Psoas muscle (tissue), 8 donors: ENCODE measurements at regions of chr7 and their contacts with region 1.

Region 1: DNA sequence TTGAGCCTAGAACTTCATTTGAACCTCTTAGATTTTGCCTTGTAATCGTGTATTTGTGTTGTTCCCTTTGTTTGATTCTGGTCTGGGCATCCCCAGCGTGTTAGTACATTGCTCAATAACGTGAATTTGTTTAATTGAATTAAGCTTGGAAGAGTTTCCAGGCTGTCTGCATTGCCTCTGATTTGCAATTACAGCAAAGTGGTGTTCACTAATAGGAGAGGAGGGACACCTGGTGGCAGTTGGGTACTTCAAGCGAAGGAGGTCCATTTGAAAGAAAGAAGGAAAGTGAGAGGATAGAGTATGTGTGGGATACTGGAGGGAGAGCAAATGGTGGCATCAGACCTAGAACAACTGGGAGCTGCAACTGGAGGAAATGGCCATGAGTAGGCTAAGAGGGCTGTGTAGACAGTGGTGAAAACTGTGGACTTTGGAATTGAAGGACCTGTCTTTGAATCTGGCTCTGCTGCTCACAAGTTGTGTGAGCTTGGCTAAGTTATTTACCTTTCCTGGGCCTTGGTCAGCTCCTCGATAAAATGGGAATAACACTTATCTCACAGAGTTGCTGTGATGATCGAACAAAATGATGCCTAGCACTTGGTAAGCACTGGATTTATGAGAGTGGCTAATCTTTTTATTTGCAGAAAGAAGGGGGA is 15.1 kb downstream of the LSMEM1 start:
- DNase-seq: peak in 1 of 2 donors; percentile 55
- ATAC-seq: peak; percentile 86 to 96 (median 90)
- H3K4me3 ChIP-seq: no peak overlapping the region
- H3K27ac ChIP-seq: no peak overlapping the region
- H3K4me1 ChIP-seq: peaks cover 11% of the 10 kb centered on the region
- H3K27me3 ChIP-seq: no peaks in the 10 kb centered on the region
- CTCF ChIP-seq: peak; percentile 68

Region 2: GRCh38 chr7:111741811-111742240 is 754.1 kb before region 1 on chr7:
- intact Hi-C with region 1: loop called in 1 of 2 experiments (anchors 2 kb)
- DNase-seq: no peak
- ATAC-seq: peak; percentile 68 to 83 (median 72)
- H3K4me3 ChIP-seq: no peak overlapping the region
- H3K27ac ChIP-seq: no peak overlapping the region
- H3K4me1 ChIP-seq: no peaks in the 10 kb centered on the region
- H3K27me3 ChIP-seq: no peaks in the 10 kb centered on the region
- CTCF ChIP-seq: peak; percentile 64

Region 3: DNA sequence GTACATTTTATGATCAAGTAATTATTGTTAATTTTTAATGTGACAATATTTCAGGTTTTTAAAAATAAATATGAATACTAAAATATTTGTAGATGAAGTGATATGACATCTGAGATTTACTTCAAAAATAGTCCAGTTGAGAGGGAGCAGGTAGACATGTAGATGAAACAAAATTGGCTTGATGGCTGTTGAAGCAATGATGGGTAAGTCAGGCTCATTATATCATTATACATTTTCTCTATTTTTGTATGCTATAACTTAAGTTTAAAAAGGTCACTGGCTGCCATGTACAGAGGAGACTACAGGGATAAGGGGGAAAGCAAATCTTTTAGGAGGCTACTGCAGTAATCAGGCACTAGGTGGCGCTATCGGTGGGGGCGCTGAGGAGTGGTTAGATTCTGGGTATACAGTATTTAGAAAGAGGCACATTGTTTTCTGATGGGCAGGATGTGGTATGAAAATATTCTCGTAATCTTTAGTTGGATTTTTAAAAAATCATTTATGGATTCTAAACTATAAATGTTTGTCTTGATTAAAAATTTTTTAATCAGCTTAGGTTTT is 743.8 kb before region 1 on chr7:
- intact Hi-C with region 1: loop called in 1 of 2 experiments (anchors 10 kb)
- DNase-seq: peak; percentile 39 to 58
- ATAC-seq: peak in 1 of 4 donors; percentile 57
- H3K4me3 ChIP-seq: no peak overlapping the region
- H3K27ac ChIP-seq: no peak overlapping the region
- H3K4me1 ChIP-seq: no peaks in the 10 kb centered on the region
- H3K27me3 ChIP-seq: no peaks in the 10 kb centered on the region
- CTCF ChIP-seq: peak; percentile 53

Region 4: GRCh38 chr7:111953611-111954010 is 542.3 kb before region 1 on chr7:
- intact Hi-C with region 1: loop called (anchors 2 to 10 kb)
- DNase-seq: no peak
- ATAC-seq: peak; percentile 85 to 88 (median 88)
- H3K4me3 ChIP-seq: no peak overlapping the region
- H3K27ac ChIP-seq: no peak overlapping the region
- H3K4me1 ChIP-seq: peaks cover 8% of the 10 kb centered on the region
- H3K27me3 ChIP-seq: no peaks in the 10 kb centered on the region
- CTCF ChIP-seq: peak; percentile 30

Region 5: GRCh38 chr7:112386619-112387018 is 109.3 kb before region 1 on chr7:
- intact Hi-C with region 1: no loop called
- DNase-seq: no peak
- ATAC-seq: no peak
- H3K4me3 ChIP-seq: no peak overlapping the region
- H3K27ac ChIP-seq: no peak overlapping the region
- H3K4me1 ChIP-seq: no peaks in the 10 kb centered on the region
- H3K27me3 ChIP-seq: no peaks in the 10 kb centered on the region
- CTCF ChIP-seq: no peak

Region 6: DNA sequence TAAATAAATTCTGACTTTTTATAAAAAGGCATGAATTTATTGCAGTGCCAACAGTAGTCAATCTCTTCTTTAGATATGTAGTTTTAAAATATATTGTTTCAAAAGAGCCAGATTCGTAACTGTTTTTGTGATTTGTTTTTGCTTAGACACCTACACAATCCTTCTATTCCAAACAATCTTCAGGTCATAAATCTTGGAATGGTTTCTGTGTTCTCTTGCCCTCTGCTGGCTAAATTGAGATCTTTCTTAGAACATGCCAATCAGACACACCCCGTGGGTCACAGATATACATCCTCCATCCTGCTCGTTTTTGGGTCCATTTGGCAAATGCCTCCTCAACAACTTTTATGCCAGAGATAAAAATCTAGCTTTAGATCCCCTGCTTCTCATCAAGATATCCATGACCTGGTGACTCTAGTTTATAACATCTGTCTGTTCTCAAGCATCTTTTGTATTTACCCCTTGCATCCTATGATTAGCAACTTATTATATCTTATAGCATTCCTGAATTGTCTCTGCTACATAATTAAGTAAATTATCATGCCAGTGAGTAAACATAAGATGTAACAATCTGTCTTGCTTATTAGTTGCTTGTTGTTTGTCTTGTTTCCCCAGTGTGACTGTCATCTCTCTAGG is 81.0 kb before region 1 on chr7:
- intact Hi-C with region 1: loop called (anchors 5 kb)
- DNase-seq: no peak
- ATAC-seq: peak; percentile 58 to 90 (median 74)
- H3K4me3 ChIP-seq: no peak overlapping the region
- H3K27ac ChIP-seq: no peak overlapping the region
- H3K4me1 ChIP-seq: no peaks in the 10 kb centered on the region
- H3K27me3 ChIP-seq: no peaks in the 10 kb centered on the region
- CTCF ChIP-seq: peak; percentile 66